Activated CD4-positive, alpha-beta T cell treated with anti-CD3 and anti-CD28 coated beads for 36 hours (primary cell): ENCODE measurements at regions of chr2 and their contacts with region 1.

Region 1: DNA sequence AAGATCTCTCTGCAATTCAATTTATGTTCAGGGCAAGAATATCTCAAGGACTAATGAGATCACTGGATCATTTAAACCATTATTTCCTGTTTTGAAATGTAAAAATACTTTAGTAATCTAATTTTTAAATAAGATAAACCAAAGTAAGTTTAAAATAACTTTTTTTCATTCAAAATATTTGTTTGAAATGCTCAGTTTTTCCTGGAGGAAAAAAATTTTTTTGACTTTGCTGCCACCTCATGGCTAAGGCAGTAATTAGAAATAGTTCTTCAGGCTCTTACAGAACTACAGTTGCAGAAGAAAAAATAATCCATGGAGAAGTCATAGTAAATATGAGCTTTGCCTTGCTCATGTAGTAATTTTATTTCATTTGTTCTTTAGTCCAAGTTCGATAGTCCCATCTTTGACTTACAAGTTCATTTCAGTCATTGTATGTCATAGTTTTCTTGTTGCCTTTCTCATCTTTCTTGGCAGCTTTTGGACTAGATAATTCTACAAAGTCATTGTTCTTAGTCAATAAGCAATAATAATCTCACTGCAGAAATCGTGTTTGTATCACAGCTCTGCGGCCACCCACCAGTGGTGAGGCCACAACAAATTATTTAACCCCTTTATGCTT is 127.4 kb downstream of the DPP4 start:
- DNase-seq: peak; percentile 30
- ATAC-seq: no peak
- H3K4me3 Mint-ChIP-seq: no peak overlapping the region
- H3K27ac Mint-ChIP-seq: no peak overlapping the region
- H3K4me1 Mint-ChIP-seq: no peaks in the 10 kb centered on the region
- H3K27me3 Mint-ChIP-seq: no peaks in the 10 kb centered on the region

Region 2: GRCh38 chr2:161426922-161427663 is 519.5 kb before region 1 on chr2:
- CTCF ChIA-PET with region 1: no interaction called
- POLR2A ChIA-PET with region 1: no interaction called
- intact Hi-C with region 1: loop called (anchors 5 to 10 kb)
- DNase-seq: peak; percentile 51
- ATAC-seq: peak; percentile 30
- H3K4me3 Mint-ChIP-seq: peak overlapping the region; percentile 51
- H3K27ac Mint-ChIP-seq: peak overlapping the region; percentile 67
- H3K4me1 Mint-ChIP-seq: peaks cover 21% of the 10 kb centered on the region
- H3K27me3 Mint-ChIP-seq: peaks cover 72% of the 10 kb centered on the region

Region 3: GRCh38 chr2:161586517-161587167 is 360.0 kb before region 1 on chr2:
- CTCF ChIA-PET with region 1: interaction called, 72 read pairs
- POLR2A ChIA-PET with region 1: no interaction called
- intact Hi-C with region 1: loop called (anchors 1 kb)
- DNase-seq: no peak
- ATAC-seq: no peak
- H3K4me3 Mint-ChIP-seq: no peak overlapping the region
- H3K27ac Mint-ChIP-seq: no peak overlapping the region
- H3K4me1 Mint-ChIP-seq: no peaks in the 10 kb centered on the region
- H3K27me3 Mint-ChIP-seq: peaks cover 7% of the 10 kb centered on the region

Region 4: GRCh38 chr2:161709428-161709827 is 237.2 kb before region 1 on chr2:
- CTCF ChIA-PET with region 1: no interaction called
- POLR2A ChIA-PET with region 1: no interaction called
- intact Hi-C with region 1: loop called in 1 of 2 experiments (anchors 10 kb)
- DNase-seq: no peak
- ATAC-seq: no peak
- H3K4me3 Mint-ChIP-seq: peak overlapping the region; percentile 8
- H3K27ac Mint-ChIP-seq: no peak overlapping the region
- H3K4me1 Mint-ChIP-seq: peaks cover 10% of the 10 kb centered on the region
- H3K27me3 Mint-ChIP-seq: no peaks in the 10 kb centered on the region

Region 5: GRCh38 chr2:161808564-161808963 is 138.0 kb before region 1 on chr2:
- CTCF ChIA-PET with region 1: no interaction called
- POLR2A ChIA-PET with region 1: no interaction called
- intact Hi-C with region 1: loop called in 1 of 2 experiments (anchors 5 kb)
- DNase-seq: no peak
- ATAC-seq: no peak
- H3K4me3 Mint-ChIP-seq: no peak overlapping the region
- H3K27ac Mint-ChIP-seq: no peak overlapping the region
- H3K4me1 Mint-ChIP-seq: no peaks in the 10 kb centered on the region
- H3K27me3 Mint-ChIP-seq: no peaks in the 10 kb centered on the region

Region 6: DNA sequence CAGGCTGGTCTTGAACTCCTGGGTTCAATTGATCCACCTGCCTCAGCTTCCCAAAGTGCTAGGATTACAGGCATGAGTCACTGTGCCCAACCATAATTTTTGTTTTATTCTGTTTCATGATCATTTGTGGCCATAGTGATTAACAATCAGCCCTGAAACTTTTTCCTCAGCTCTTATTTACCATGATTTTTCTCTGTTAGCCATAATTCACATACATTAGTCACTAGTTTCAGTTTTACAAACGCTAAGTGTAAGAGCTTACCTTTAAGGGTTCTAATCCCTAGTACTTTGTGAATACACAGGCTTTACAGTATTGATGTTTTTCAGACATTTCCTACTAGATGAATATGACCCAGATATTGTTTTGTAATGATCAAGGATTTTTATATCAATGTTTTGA is 88.7 kb before region 1 on chr2:
- CTCF ChIA-PET with region 1: interaction called, 3 read pairs
- POLR2A ChIA-PET with region 1: no interaction called
- intact Hi-C with region 1: loop called in 1 of 2 experiments (anchors 5 kb)
- DNase-seq: no peak
- ATAC-seq: peak; percentile 96
- H3K4me3 Mint-ChIP-seq: no peak overlapping the region
- H3K27ac Mint-ChIP-seq: no peak overlapping the region
- H3K4me1 Mint-ChIP-seq: peaks cover 6% of the 10 kb centered on the region
- H3K27me3 Mint-ChIP-seq: no peaks in the 10 kb centered on the region